Activated CD4-positive, alpha-beta T cell treated with anti-CD3 and anti-CD28 coated beads, Interleukin-2, amount 10 ng/mL, durations not matched to agents 24 days and 14 days (primary cell): ENCODE measurements at regions of chr1 and their contacts with region 1.

Region 1: GRCh38 chr1:111755331-111756123 is at the start of gene DDX20:
- DNase-seq: peak; percentile 98
- H3K4me3 Mint-ChIP-seq: peak within 1 kb of the TSS; percentile 88
- H3K27ac Mint-ChIP-seq: peak within 1 kb of the TSS; percentile 92
- H3K4me1 Mint-ChIP-seq: peaks cover 41% of the 10 kb centered on the region
- H3K27me3 Mint-ChIP-seq: peaks cover 8% of the 10 kb centered on the region
- total RNA-seq, gene DDX20: 18.7 and 24.2 TPM in 2 replicates

Region 2: GRCh38 chr1:110879758-110880606 is 875.5 kb before region 1 on chr1:
- intact Hi-C with region 1: loop called (anchors 5 kb)
- DNase-seq: peak; percentile 91
- H3K4me3 Mint-ChIP-seq: peak overlapping the region; percentile 84
- H3K27ac Mint-ChIP-seq: peak overlapping the region; percentile 99
- H3K4me1 Mint-ChIP-seq: peaks cover 65% of the 10 kb centered on the region
- H3K27me3 Mint-ChIP-seq: no peaks in the 10 kb centered on the region

Region 3: GRCh38 chr1:111203681-111204200 is 551.8 kb before region 1 on chr1:
- intact Hi-C with region 1: loop called (anchors 5 kb)
- DNase-seq: peak; percentile 96
- H3K4me3 Mint-ChIP-seq: peak overlapping the region; percentile 98
- H3K27ac Mint-ChIP-seq: peak overlapping the region; percentile 82
- H3K4me1 Mint-ChIP-seq: peaks cover 55% of the 10 kb centered on the region
- H3K27me3 Mint-ChIP-seq: no peaks in the 10 kb centered on the region

Region 4: DNA sequence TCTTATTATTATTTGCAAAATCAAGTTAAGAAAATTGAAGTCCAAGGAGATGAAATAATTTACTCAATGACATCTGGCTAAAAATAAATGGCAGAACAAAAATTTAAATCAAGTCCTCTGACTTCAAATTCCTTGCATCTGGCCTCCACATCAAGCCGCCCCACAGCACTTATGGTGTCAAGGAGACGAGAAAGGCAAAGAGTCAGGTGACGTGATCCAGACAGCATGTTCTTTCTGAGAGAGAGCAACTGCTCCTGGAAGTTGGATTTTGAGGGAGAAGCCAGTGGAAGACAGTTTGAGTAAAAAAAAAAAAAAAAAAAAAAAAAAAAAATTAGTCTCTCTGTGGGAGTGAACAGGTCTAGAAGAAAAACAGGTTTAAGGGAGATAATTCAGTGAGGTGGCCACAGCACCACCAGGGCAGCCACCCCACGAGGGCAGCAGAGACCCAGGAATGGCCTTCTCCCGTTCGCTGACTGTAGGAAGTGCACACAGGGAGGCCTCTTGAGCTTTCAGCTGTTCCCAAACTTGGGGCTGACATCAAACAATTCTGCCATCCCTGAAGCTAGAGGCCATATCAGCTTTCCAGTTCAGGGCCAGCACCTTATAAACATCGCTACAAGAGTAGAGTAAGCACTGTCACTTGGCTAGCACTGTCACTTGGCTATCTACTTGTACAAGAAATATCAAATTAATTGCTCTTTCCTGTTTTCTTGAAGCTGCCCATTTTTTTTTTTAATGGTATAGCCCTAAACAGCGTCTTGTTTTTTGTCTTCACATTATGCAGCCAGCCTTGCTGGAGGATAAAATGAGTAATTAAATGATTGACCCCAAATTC is 273.9 kb before region 1 on chr1:
- intact Hi-C with region 1: loop called (anchors 2 kb)
- DNase-seq: peak; percentile 89
- H3K4me3 Mint-ChIP-seq: no peak overlapping the region
- H3K27ac Mint-ChIP-seq: no peak overlapping the region
- H3K4me1 Mint-ChIP-seq: peaks cover 23% of the 10 kb centered on the region
- H3K27me3 Mint-ChIP-seq: peaks cover 16% of the 10 kb centered on the region

Region 5: GRCh38 chr1:111619635-111620440 is 135.7 kb before region 1 on chr1 and contains the start of gene RAP1A:
- intact Hi-C with region 1: loop called (anchors 5 kb)
- DNase-seq: peak; percentile 97
- H3K4me3 Mint-ChIP-seq: peak within 1 kb of the TSS; percentile 99
- H3K27ac Mint-ChIP-seq: peak within 1 kb of the TSS; percentile 93
- H3K4me1 Mint-ChIP-seq: peaks cover 66% of the 10 kb centered on the region
- H3K27me3 Mint-ChIP-seq: no peaks in the 10 kb centered on the region
- total RNA-seq, gene RAP1A: 306 and 307 TPM in 2 replicates